GM12878 (cell line): ENCODE measurements at regions of chr6 and their contacts with region 1.

Region 1: DNA sequence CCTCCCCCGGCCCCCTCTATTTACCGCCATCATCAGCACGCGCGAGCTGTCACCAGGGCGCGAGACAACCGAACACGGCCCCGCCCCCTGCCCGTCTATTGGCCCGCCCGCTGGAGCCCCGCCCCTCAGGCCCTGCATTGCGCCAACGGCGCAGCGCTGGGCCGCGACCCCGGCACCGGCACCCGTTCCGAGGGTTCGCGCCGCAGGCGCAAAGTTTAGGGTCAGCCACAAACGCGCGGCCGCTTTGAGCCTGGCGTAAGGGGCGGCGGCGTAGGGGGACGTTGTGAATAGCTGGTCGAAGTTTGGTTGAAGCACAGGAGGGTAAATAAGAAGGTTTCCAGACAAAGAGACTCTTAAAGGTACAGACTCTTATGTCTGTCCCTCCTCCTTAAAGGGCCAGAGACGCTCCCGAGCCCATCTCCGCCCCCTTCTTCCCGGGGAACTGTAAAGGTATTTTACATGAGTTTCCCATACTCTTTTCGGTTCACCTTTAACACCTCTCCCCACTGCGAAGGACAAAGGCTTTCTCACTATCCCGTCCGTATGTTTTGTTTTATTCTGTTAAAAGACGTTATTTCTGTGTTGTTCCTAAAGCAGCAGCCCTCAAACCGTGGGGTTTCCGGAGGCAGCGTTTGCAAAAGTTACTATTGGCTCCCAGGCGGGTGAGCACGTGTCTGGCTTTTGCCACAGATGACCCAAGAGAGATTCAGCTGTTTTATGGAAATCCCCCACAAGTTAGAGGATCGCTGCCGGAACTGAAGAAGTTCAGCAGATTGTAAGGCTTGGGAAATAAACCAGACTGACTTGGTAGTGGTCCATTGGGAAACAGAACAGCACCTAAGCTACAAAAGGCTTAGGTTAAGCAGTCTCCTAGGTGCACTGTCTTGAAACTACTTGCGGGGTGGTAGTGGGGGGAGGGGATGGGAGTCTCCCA is at the start of gene USP49:
- DNase-seq: peak; percentile 65
- ATAC-seq: peak; percentile 96
- H3K4me3 ChIP-seq: peak within 1 kb of the TSS; percentile 89
- H3K27ac ChIP-seq: peak within 1 kb of the TSS; percentile 90
- H3K4me1 ChIP-seq: peaks cover 6% of the 10 kb centered on the region; the same call in 1 of the 2 replicates
- H3K27me3 ChIP-seq: no peaks in the 10 kb centered on the region
- CTCF ChIP-seq: no peak
- EP300 ChIP-seq: no peak
- POLR2A ChIP-seq: peak; percentile 75
- RAD21 ChIP-seq: no peak
- polyA plus RNA-seq, gene USP49: 1.0 TPM

Region 2: DNA sequence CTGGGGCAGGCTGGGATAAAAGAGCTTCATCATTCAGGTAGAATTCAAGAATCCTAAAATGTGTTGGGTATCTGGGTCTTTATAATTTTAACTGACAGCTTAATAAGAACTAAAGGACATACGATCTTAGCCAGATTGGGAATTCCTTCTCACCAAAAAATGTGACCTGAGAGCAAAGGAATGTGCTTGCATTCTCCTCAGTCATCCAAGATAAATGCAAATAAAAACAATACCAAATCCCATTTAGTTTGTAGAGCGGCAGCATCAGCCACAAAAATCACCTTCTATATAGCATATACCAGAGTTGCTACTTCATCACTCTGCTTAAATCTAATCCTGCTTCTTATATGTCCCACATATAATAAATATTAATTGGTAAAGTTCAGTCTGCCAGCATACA is 17.3 kb before region 1 on chr6:
- CTCF ChIA-PET with region 1: interaction called, 3 read pairs
- POLR2A ChIA-PET with region 1: interaction called, 10 read pairs
- RAD21 ChIA-PET with region 1: no interaction called
- SMC1A ChIA-PET with region 1: no interaction called
- in situ Hi-C with region 1: no loop called
- intact Hi-C with region 1: no loop called
- DNase-seq: no peak
- ATAC-seq: no peak
- H3K4me3 ChIP-seq: no peak overlapping the region
- H3K27ac ChIP-seq: no peak overlapping the region
- H3K4me1 ChIP-seq: no peaks in the 10 kb centered on the region
- H3K27me3 ChIP-seq: no peaks in the 10 kb centered on the region
- CTCF ChIP-seq: no peak
- EP300 ChIP-seq: no peak
- POLR2A ChIP-seq: no peak
- RAD21 ChIP-seq: no peak

Region 3: GRCh38 chr6:41936073-41936837 is 40.7 kb after region 1 on chr6:
- CTCF ChIA-PET with region 1: interaction called, 10 read pairs
- POLR2A ChIA-PET with region 1: interaction called, 4 read pairs
- RAD21 ChIA-PET with region 1: no interaction called
- SMC1A ChIA-PET with region 1: interaction called, 6 read pairs
- in situ Hi-C with region 1: no loop called
- intact Hi-C with region 1: loop called (anchors 1 kb)
- DNase-seq: peak; percentile 53
- ATAC-seq: peak; percentile 83
- H3K4me3 ChIP-seq: no peak overlapping the region
- H3K27ac ChIP-seq: peak overlapping the region; percentile 60
- H3K4me1 ChIP-seq: peaks cover 43% of the 10 kb centered on the region
- H3K27me3 ChIP-seq: no peaks in the 10 kb centered on the region
- CTCF ChIP-seq: peak; percentile 84 to 94 (median 91)
- EP300 ChIP-seq: no peak
- POLR2A ChIP-seq: peak; percentile 35
- RAD21 ChIP-seq: peak; percentile 68

Region 4: DNA sequence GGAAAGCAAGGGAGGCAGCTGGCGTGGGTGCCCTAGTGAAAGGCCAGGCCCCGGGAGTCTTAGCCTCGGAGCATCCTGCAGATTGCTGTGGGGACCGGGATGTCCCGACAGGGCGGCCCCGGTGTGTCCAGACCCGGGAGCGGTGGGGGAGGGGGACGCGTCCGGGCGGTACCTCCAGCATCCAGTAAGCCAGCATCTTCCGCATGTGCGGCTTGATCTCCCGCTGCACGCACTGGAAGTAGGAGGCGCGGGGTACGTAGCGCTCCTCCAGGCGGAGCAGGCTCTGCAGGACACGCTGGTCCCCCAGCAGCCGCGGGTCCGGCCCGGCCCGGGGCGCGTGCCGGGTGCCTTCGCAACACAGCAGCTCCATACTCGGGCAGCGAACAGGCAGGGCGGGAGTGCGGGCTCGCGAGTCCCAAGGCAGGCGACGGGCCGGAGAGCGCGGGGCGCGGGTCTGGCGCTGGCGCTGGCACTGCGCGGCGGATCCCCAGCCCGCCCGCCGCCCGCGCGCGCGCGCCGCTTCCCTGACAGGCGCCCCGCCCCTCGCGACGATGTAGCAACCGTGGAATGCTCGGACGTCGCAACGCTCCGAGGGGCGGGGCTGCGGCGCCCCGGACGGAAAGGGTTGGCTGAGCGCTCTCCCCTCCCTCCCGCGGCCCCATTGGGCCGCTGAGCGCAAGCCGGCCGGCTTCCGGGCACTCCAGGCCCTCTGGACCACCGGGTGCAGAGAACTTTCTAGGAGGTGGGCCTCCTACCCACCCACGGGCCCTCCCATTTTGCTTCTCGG is 45.9 kb after region 1 on chr6 and contains the start of gene CCND3:
- CTCF ChIA-PET with region 1: interaction called, 10 read pairs
- POLR2A ChIA-PET with region 1: interaction called, 4 read pairs
- RAD21 ChIA-PET with region 1: no interaction called
- SMC1A ChIA-PET with region 1: interaction called, 6 read pairs
- in situ Hi-C with region 1: no loop called
- intact Hi-C with region 1: loop called (anchors 1 kb)
- DNase-seq: peak; percentile 44
- ATAC-seq: peak; percentile 94
- H3K4me3 ChIP-seq: peak within 1 kb of the TSS; percentile 98
- H3K27ac ChIP-seq: peak within 1 kb of the TSS; percentile 61
- H3K4me1 ChIP-seq: peaks cover 29% of the 10 kb centered on the region
- H3K27me3 ChIP-seq: no peaks in the 10 kb centered on the region
- CTCF ChIP-seq: no peak
- EP300 ChIP-seq: no peak
- POLR2A ChIP-seq: peak; percentile 27; the same call in 1 of the 2 replicates
- RAD21 ChIP-seq: no peak
- polyA plus RNA-seq, gene CCND3: 6.0 to 16.3 TPM

Region 5: DNA sequence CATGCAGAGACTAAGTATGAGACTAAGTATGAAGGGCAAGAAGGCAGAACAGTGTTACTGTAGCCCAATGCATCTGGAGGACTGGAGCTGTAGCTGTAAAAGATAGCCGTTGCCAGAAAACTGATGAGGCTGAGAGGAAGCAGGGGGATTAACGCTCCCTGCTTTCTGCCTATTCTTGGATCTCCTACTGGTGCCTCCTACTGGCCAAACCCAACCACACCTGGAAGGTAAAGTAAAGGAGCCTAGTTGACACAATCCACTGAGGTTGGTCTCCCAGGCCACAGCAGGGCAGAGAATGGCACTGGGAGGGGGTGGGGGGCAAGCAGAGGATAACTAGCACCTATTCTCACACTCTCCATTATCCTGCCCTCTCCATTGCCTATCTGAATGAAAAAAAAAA is 427.1 kb after region 1 on chr6:
- CTCF ChIA-PET with region 1: no interaction called
- POLR2A ChIA-PET with region 1: no interaction called
- RAD21 ChIA-PET with region 1: no interaction called
- SMC1A ChIA-PET with region 1: no interaction called
- in situ Hi-C with region 1: no loop called
- intact Hi-C with region 1: no loop called
- DNase-seq: no peak
- ATAC-seq: no peak
- H3K4me3 ChIP-seq: no peak overlapping the region
- H3K27ac ChIP-seq: no peak overlapping the region
- H3K4me1 ChIP-seq: no peaks in the 10 kb centered on the region
- H3K27me3 ChIP-seq: no peaks in the 10 kb centered on the region
- CTCF ChIP-seq: peak in 1 of 3 experiments; percentile 10; a peak in 1 of 6 replicates
- EP300 ChIP-seq: no peak
- POLR2A ChIP-seq: no peak
- RAD21 ChIP-seq: no peak